ENCODE measurements at regions of chr7 and their contacts with region 1.

Region 1: GRCh38 chr7:17298207-17298839 is at the start of gene AHR:
- DNase-seq: peak; percentile 95 to 97
- H3K4me3 ChIP-seq: peak within 1 kb of the TSS; percentile 63 to 95 (median 92)
- H3K27ac ChIP-seq: peak within 1 kb of the TSS; percentile 93 to 99 (median 97)
- H3K4me1 ChIP-seq: peaks cover 0 to 32% (median 17%) of the 10 kb centered on the region in 4 donors
- H3K27me3 ChIP-seq: no peaks in the 10 kb centered on the region
- CTCF ChIP-seq: no peak
- EP300 ChIP-seq: no peak
- POLR2A ChIP-seq: peak in 1 of 4 donors; percentile 89
- total RNA-seq, gene AHR: 34.8 to 136 (median 81.2) TPM

Region 2: GRCh38 chr7:16982640-16983350 is 315.5 kb before region 1 on chr7:
- intact Hi-C with region 1: loop called (anchors 10 kb)
- DNase-seq: peak in 1 of 2 donors; percentile 76
- H3K4me3 ChIP-seq: no peak overlapping the region
- H3K27ac ChIP-seq: peak overlapping the region in 2 of 5 donors; percentile 19 to 24
- H3K4me1 ChIP-seq: peaks cover 3 to 35% (median 16%) of the 10 kb centered on the region in 4 donors
- H3K27me3 ChIP-seq: no peaks in the 10 kb centered on the region
- CTCF ChIP-seq: peak in 5 of 7 experiments; percentile 76 to 96 (median 89)
- EP300 ChIP-seq: no peak
- POLR2A ChIP-seq: no peak

Region 3: GRCh38 chr7:17559388-17559787 is 261.1 kb after region 1 on chr7:
- intact Hi-C with region 1: no loop called
- DNase-seq: no peak
- H3K4me3 ChIP-seq: no peak overlapping the region
- H3K27ac ChIP-seq: peak overlapping the region in 3 of 5 donors; percentile 23 to 73 (median 58)
- H3K4me1 ChIP-seq: peaks cover 9 to 35% (median 18%) of the 10 kb centered on the region in 4 donors
- H3K27me3 ChIP-seq: no peaks in the 10 kb centered on the region
- CTCF ChIP-seq: no peak
- EP300 ChIP-seq: no peak
- POLR2A ChIP-seq: no peak

Region 4: GRCh38 chr7:17640730-17641377 is 342.5 kb after region 1 on chr7:
- intact Hi-C with region 1: loop called (anchors 10 kb)
- DNase-seq: peak in 1 of 2 donors; percentile 57
- H3K4me3 ChIP-seq: no peak overlapping the region
- H3K27ac ChIP-seq: no peak overlapping the region
- H3K4me1 ChIP-seq: no peaks in the 10 kb centered on the region
- H3K27me3 ChIP-seq: no peaks in the 10 kb centered on the region
- CTCF ChIP-seq: peak in 5 of 7 experiments; percentile 28 to 69 (median 45)
- EP300 ChIP-seq: no peak
- POLR2A ChIP-seq: no peak